ENCODE measurements at regions of chr7 and their contacts with region 1.

Region 1: GRCh38 chr7:54678763-54679489 is 80.1 kb downstream of the SEC61G start:
- DNase-seq: peak; percentile 11
- H3K4me3 ChIP-seq: no peak overlapping the region
- H3K27ac ChIP-seq: no peak overlapping the region
- H3K4me1 ChIP-seq: no peaks in the 10 kb centered on the region
- H3K27me3 ChIP-seq: peaks cover 14% of the 10 kb centered on the region
- CTCF ChIP-seq: peak; percentile 31 to 42

Region 2: GRCh38 chr7:53350241-53350640 is 1328.7 kb before region 1 on chr7:
- CTCF ChIA-PET with region 1: no interaction called
- dilution Hi-C with region 1: no loop called
- in situ Hi-C with region 1: no loop called
- intact Hi-C with region 1: loop called (anchors 10 kb)
- DNase-seq: no peak
- H3K4me3 ChIP-seq: no peak overlapping the region
- H3K27ac ChIP-seq: no peak overlapping the region
- H3K4me1 ChIP-seq: no peaks in the 10 kb centered on the region
- H3K27me3 ChIP-seq: no peaks in the 10 kb centered on the region
- CTCF ChIP-seq: peak; percentile 68 to 79

Region 3: GRCh38 chr7:53900856-53901528 is 777.9 kb before region 1 on chr7:
- CTCF ChIA-PET with region 1: no interaction called
- dilution Hi-C with region 1: no loop called
- in situ Hi-C with region 1: no loop called
- intact Hi-C with region 1: loop called (anchors 10 kb)
- DNase-seq: no peak
- H3K4me3 ChIP-seq: no peak overlapping the region
- H3K27ac ChIP-seq: no peak overlapping the region
- H3K4me1 ChIP-seq: no peaks in the 10 kb centered on the region
- H3K27me3 ChIP-seq: no peaks in the 10 kb centered on the region
- CTCF ChIP-seq: no peak

Region 4: DNA sequence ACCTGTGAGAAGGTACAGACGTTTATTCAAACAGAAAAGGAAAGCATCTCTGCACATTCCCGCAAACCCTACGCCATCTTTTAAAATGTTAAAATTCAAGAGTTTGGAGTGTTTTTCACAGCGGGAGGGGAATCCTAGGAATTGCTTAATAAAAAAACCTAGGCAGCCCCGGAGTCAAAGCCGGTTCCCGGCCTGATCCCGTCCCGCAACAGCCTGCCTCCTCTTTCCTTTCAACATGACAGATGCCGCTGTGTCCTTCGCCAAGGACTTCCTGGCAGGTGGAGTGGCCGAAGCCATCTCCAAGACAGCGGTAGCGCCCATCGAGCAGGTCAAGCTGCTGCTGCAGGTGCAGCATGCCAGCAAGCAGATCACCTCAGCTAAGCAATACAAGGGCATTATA is 259.7 kb before region 1 on chr7:
- CTCF ChIA-PET with region 1: no interaction called
- dilution Hi-C with region 1: no loop called
- in situ Hi-C with region 1: no loop called
- intact Hi-C with region 1: no loop called
- DNase-seq: no peak
- H3K4me3 ChIP-seq: no peak overlapping the region
- H3K27ac ChIP-seq: no peak overlapping the region
- H3K4me1 ChIP-seq: no peaks in the 10 kb centered on the region
- H3K27me3 ChIP-seq: peaks cover 2% of the 10 kb centered on the region
- CTCF ChIP-seq: no peak

Measured in mammary epithelial cell (primary cell).